CD4-positive, alpha-beta memory T cell (primary cell): ENCODE measurements at regions of chr1 and their contacts with region 1.

Region 1: GRCh38 chr1:161045750-161046571 is at the start of gene USF1:
- DNase-seq: peak; percentile 94 to 95 (median 95)
- H3K4me3 ChIP-seq: peak within 1 kb of the TSS; percentile 62 to 89
- H3K4me3 Mint-ChIP-seq: peak within 1 kb of the TSS; percentile 87 to 99 (median 94)
- H3K27ac ChIP-seq: peak within 1 kb of the TSS; percentile 91
- H3K27ac Mint-ChIP-seq: peak within 1 kb of the TSS; percentile 90 to 100 (median 99)
- H3K4me1 ChIP-seq: peaks cover 39% of the 10 kb centered on the region
- H3K4me1 Mint-ChIP-seq: peaks cover 29 to 58% (median 42%) of the 10 kb centered on the region in 4 donors
- H3K27me3 ChIP-seq: no peaks in the 10 kb centered on the region
- H3K27me3 Mint-ChIP-seq: no peaks in the 10 kb centered on the region
- total RNA-seq, gene USF1: 101 to 102 TPM

Region 2: GRCh38 chr1:159752135-159752580 is 1293.8 kb before region 1 on chr1:
- CTCF ChIA-PET with region 1: no interaction called
- POLR2A ChIA-PET with region 1: no interaction called
- intact Hi-C with region 1: no loop called
- DNase-seq: no peak
- H3K4me3 ChIP-seq: no peak overlapping the region
- H3K4me3 Mint-ChIP-seq: no peak overlapping the region
- H3K27ac ChIP-seq: no peak overlapping the region
- H3K27ac Mint-ChIP-seq: no peak overlapping the region
- H3K4me1 ChIP-seq: no peaks in the 10 kb centered on the region
- H3K4me1 Mint-ChIP-seq: no peaks in the 10 kb centered on the region
- H3K27me3 ChIP-seq: no peaks in the 10 kb centered on the region
- H3K27me3 Mint-ChIP-seq: peaks cover 9 to 14% of the 10 kb centered on the region in 2 donors

Region 3: DNA sequence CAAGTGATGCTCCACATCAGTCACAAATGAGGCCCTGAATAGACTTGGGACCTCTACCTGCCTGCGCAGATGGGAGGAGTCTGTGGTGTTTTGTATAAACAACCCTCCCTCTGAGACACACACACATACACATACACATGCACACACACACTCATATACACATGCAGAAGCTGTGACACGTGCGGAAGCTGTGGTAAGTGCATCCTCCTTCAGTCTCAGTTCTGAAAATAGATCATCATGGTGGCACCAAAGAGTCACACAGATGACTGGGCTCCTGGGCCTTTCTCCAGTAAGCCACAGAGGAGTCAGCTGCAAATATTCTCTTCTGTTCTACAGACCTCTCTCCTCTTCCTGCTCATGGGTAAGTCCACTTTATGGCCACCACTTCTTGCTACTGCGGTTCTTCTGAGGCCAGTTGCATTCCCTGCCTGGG is 250.0 kb before region 1 on chr1 and contains the start of gene LY9:
- CTCF ChIA-PET with region 1: no interaction called
- POLR2A ChIA-PET with region 1: interaction called, 12 read pairs
- intact Hi-C with region 1: no loop called
- DNase-seq: peak; percentile 90 to 96 (median 95)
- H3K4me3 ChIP-seq: peak within 1 kb of the TSS; percentile 49 to 78
- H3K4me3 Mint-ChIP-seq: peak within 1 kb of the TSS; percentile 97 to 99 (median 98)
- H3K27ac ChIP-seq: peak within 1 kb of the TSS; percentile 82
- H3K27ac Mint-ChIP-seq: peak within 1 kb of the TSS; percentile 90 to 98 (median 97)
- H3K4me1 ChIP-seq: peaks cover 45% of the 10 kb centered on the region
- H3K4me1 Mint-ChIP-seq: peaks cover 37 to 69% (median 48%) of the 10 kb centered on the region in 4 donors
- H3K27me3 ChIP-seq: no peaks in the 10 kb centered on the region
- H3K27me3 Mint-ChIP-seq: no peaks in the 10 kb centered on the region
- total RNA-seq, gene LY9: 131 to 136 TPM

Region 4: DNA sequence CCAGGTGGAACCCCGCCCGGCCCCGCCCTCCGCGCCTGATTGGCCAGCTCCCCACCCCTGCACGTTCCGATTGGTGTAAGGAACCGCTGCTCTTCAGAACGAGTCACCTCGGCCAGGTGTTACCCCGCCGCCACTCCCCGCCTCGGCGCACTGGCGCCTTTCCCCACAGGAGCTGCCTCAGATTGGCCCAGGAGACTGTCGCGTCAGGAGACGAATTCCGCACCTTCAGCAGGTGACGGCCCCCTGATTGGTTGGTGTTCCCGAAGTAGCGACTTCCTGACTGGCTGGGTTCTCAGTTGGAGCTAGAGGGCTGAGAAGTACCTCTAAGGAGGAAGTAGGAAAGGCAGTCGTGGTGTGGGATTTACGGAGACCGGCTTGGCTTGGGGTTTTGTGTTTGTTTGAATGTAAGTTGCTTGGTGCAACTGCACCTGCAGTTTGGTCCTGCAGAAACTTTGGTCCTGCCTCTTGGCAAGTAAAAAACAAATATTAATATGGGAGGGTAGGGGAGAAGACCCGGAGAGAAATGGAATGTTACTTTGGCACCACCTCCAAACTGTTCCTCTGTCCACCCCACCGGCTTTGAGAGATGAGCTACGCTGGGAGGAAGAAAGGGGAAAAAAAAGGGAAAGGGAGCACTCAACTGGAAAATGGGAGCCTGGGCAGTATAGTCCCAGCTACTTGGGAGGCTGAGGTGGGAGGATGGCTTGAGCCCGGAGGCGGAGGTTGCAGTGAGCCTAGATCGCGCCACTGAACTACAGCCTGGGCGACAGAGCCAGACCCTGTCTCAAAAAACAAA is 24.6 kb before region 1 on chr1:
- CTCF ChIA-PET with region 1: interaction called, 42 read pairs
- POLR2A ChIA-PET with region 1: interaction called, 62 read pairs
- intact Hi-C with region 1: no loop called
- DNase-seq: peak; percentile 88 to 98 (median 91)
- H3K4me3 ChIP-seq: peak overlapping the region; percentile 40 to 72
- H3K4me3 Mint-ChIP-seq: peak overlapping the region; percentile 89 to 97 (median 94)
- H3K27ac ChIP-seq: peak overlapping the region; percentile 72
- H3K27ac Mint-ChIP-seq: peak overlapping the region; percentile 86 to 99 (median 96)
- H3K4me1 ChIP-seq: peaks cover 36% of the 10 kb centered on the region
- H3K4me1 Mint-ChIP-seq: peaks cover 24 to 58% (median 35%) of the 10 kb centered on the region in 4 donors
- H3K27me3 ChIP-seq: no peaks in the 10 kb centered on the region
- H3K27me3 Mint-ChIP-seq: no peaks in the 10 kb centered on the region

Region 5: DNA sequence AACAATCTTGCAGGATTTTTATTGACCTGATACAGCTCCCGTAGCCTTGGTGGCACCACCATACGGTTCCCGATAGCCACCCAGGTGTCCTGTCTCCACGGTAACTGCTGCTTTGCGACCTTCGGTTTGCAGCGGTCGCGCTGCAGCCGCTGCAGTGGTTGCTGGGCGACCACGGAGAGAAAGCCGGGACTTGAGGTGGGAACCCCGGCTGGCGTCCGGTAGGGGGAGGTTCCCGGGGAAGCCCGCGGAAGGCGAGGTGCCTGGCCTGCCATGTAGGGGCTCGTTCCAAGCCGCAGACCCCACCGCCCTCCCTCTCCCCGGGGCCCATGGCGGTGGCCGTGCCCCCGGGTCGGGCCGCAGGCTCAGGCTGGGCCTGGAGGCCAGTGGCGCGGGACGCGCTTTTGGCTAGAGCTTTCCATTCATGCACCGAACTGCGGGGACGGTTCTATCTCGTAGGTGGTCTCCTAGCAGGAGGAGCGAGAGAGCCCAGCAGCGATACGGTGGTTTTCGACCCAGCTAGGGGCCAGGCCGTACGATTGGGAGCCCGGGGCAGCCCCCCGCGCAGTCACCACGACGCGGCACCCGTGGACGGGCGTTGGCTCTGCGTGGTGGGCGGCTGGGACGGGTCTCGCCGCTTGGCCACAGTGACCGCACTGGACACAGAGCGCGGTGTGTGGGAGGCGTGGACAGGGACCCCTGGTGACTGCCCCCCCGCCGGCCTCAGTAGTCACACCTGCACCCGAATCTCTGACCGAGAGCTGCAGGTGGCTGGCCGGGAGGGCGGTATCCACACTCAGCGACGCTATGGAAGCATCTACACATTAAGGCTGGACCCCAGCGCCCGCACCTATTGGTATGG is 52.5 kb after region 1 on chr1 and contains the start of gene KLHDC9:
- CTCF ChIA-PET with region 1: interaction called, 104 read pairs
- POLR2A ChIA-PET with region 1: interaction called, 128 read pairs
- intact Hi-C with region 1: loop called (anchors 1 kb)
- DNase-seq: peak; percentile 63 to 81 (median 69)
- H3K4me3 ChIP-seq: peak within 1 kb of the TSS; percentile 54 to 72
- H3K4me3 Mint-ChIP-seq: peak within 1 kb of the TSS; percentile 81 to 94 (median 88)
- H3K27ac ChIP-seq: peak within 1 kb of the TSS; percentile 55
- H3K27ac Mint-ChIP-seq: peak within 1 kb of the TSS; percentile 75 to 100 (median 98)
- H3K4me1 ChIP-seq: peaks cover 22% of the 10 kb centered on the region
- H3K4me1 Mint-ChIP-seq: peaks cover 12 to 27% (median 20%) of the 10 kb centered on the region in 4 donors
- H3K27me3 ChIP-seq: no peaks in the 10 kb centered on the region
- H3K27me3 Mint-ChIP-seq: peaks cover 0 to 2% of the 10 kb centered on the region in 2 donors
- total RNA-seq, gene KLHDC9: 0.52 to 0.53 TPM

Region 6: DNA sequence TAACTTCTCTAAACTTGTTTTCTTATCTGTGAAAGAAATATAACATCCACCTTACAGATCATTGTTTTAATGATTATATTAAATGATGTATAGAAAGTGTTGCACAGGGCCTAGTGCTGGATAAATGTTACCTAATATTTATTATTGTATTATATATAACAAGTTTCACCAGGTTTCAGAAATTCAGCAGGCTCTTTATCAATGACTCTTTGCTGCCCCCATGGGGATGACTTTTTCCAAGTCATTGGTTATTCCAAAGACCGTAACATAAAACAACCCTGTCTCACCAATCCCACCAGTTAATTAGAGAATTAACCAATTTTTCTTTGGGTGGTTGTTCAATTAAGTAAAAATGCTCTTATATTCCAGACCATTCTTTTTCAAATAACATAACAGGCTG is 93.8 kb after region 1 on chr1:
- CTCF ChIA-PET with region 1: interaction called, 12 read pairs
- POLR2A ChIA-PET with region 1: interaction called, 3 read pairs
- intact Hi-C with region 1: loop called (anchors 5 kb)
- DNase-seq: peak; percentile 41 to 54 (median 51)
- H3K4me3 ChIP-seq: no peak overlapping the region
- H3K4me3 Mint-ChIP-seq: no peak overlapping the region
- H3K27ac ChIP-seq: no peak overlapping the region
- H3K27ac Mint-ChIP-seq: no peak overlapping the region
- H3K4me1 ChIP-seq: no peaks in the 10 kb centered on the region
- H3K4me1 Mint-ChIP-seq: peaks cover 0 to 4% (median 2%) of the 10 kb centered on the region in 4 donors
- H3K27me3 ChIP-seq: no peaks in the 10 kb centered on the region
- H3K27me3 Mint-ChIP-seq: no peaks in the 10 kb centered on the region

Region 7: DNA sequence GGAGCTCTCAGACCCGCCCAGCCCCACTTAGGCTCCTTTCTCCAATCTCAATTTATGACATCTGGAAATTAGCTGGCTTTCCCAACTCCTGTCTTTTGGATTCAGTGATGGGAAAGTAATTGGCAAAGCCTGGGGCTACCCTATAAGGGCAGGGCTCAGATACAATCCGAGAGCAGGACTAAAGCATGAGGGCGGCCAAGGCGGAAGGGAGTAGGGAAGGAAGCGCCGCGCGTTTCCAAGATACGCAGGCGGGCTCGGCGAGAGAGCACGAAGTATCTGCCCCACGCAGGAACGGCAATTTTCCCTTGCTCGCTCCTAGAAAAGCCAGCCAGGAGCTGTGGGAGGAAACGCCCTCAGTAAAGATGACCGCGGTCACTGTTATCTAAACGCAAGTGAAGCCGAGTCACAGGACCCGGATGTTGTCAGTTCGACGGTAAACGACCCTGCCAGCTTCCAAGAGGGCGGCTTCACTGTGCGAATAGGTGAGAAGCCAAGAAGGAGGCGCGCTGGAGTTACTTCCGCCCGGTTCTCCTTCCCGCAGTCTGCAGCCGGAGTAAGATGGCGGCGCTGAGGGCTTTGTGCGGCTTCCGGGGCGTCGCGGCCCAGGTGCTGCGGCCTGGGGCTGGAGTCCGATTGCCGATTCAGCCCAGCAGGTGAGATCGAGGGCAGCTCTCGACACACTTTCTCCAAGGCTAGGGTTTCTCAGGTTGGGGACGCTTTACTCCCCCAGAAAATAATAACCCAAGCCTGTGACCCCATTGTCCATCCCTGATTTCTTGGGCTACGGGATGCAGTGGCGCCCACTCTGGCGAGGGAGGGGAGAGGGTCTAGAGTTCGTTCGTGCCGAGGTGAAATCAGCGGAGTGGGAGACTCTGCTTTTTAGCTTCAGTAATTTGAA is 156.1 kb after region 1 on chr1 and contains the start of gene NDUFS2:
- CTCF ChIA-PET with region 1: no interaction called
- POLR2A ChIA-PET with region 1: interaction called, 11 read pairs
- intact Hi-C with region 1: no loop called
- DNase-seq: peak; percentile 91 to 98 (median 94)
- H3K4me3 ChIP-seq: peak within 1 kb of the TSS; percentile 85 to 98
- H3K4me3 Mint-ChIP-seq: peak within 1 kb of the TSS; percentile 95 to 98 (median 96)
- H3K27ac ChIP-seq: peak within 1 kb of the TSS; percentile 96
- H3K27ac Mint-ChIP-seq: peak within 1 kb of the TSS; percentile 94 to 99 (median 99)
- H3K4me1 ChIP-seq: peaks cover 66% of the 10 kb centered on the region
- H3K4me1 Mint-ChIP-seq: peaks cover 32 to 68% (median 56%) of the 10 kb centered on the region in 4 donors
- H3K27me3 ChIP-seq: no peaks in the 10 kb centered on the region
- H3K27me3 Mint-ChIP-seq: peaks cover 0 to 1% of the 10 kb centered on the region in 2 donors
- total RNA-seq, gene NDUFS2: 89.9 to 100 TPM